Cardiac septum (tissue), 1 donor: ENCODE measurements at regions of chr7 and their contacts with region 1.

Region 1: DNA sequence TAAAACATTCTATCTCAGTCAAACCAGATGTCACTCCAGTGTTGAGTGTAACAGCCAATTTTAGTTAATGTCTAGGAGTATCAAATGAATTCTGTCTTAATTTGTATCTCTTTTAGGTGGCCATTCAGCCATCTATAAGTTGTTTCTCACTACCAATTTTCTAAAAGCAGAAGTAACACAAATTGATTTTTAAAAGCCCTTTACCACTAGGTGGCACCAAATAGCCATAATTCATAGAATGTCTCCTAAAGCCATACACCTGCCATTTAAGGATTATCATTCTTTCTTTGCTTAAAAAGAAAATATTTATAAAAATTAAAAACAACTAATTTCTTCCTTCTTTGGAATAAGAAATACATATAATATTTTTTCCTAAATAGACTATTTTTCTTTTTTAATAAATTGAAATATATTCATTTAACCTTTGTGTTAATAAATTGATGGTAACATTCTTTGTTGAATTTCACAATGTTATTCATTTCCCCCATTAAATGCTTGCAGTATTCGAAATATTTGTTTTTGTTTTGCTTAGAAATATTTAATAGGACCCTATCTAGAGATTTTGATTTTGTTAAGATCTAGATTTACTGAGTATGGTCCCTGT is 107.8 kb upstream of the PPP1R3A start:
- DNase-seq: no peak

Region 2: DNA sequence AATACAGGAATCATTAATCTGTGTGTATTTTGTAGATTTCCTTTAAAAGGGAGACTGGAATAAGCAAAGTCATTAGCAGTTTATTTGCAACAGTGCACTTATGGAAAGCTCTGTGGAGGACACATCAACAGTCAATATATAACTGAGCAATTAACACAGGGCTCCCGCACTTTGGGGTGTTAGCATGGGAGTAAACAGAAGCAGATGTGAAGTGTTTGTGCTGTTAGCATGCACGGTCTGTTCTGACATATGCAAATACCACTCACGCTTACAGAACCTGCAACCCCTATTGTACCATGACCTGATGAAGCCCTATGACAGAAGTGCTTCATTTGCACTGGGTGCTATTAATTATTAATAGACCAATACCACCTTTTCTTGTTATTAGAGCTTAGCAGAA is 226.7 kb before region 1 on chr7:
- intact Hi-C with region 1: loop called (anchors 10 kb)
- DNase-seq: no peak

Region 3: DNA sequence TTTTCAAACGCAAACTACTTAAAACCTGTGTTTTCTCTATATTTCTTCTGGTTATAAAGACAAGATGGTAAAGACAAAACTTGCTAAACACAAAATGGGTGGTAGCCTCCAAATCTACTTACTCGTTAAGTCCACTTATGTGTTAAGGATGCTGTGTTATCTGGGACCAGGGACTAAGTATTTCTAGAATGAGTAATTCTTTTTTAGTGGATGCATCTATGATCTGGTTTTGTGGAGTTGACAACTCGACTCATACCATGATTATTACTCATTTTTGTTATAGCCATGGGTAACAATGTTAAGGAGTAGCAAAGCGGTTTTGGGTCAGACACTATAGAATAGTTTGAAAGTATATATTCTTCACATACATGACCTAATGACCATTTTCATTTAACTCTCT is 148.5 kb after region 1 on chr7:
- intact Hi-C with region 1: no loop called
- DNase-seq: no peak